HCT116 (cell line): ENCODE measurements at regions of chr1 and their contacts with region 1.

Region 1: GRCh38 chr1:118404024-118404423 is 219.0 kb upstream of the SPAG17 start:
- DNase-seq: no peak
- ATAC-seq: no peak
- H3K4me3 ChIP-seq: no peak overlapping the region
- H3K27ac ChIP-seq: no peak overlapping the region
- H3K4me1 ChIP-seq: no peaks in the 10 kb centered on the region
- H3K27me3 ChIP-seq: no peaks in the 10 kb centered on the region
- CTCF ChIP-seq: no peak
- POLR2A ChIP-seq: no peak
- RAD21 ChIP-seq: no peak

Region 2: DNA sequence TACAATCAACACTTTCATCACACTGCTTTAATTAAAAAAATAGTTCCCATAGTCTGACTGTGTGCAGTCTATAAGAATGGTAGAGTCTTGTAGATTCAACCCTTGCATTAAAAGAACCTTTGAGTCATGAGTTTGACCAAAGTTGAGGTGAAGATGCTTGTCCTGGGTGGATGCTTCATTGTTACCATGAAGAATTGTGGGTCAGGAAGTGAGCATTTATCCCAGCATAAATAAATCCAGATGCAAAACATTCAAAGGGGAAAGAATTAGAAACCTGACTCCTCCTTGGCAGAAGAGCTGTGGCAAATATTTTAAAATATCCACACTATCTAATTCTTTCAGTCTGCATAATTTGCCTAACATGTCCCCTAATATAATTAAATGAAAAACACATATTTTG is 146.1 kb before region 1 on chr1:
- CTCF ChIA-PET with region 1: no interaction called
- POLR2A ChIA-PET with region 1: no interaction called
- RAD21 ChIA-PET with region 1: no interaction called
- intact Hi-C with region 1: no loop called
- DNase-seq: no peak
- ATAC-seq: no peak
- H3K4me3 ChIP-seq: no peak overlapping the region
- H3K27ac ChIP-seq: no peak overlapping the region
- H3K4me1 ChIP-seq: no peaks in the 10 kb centered on the region
- H3K27me3 ChIP-seq: no peaks in the 10 kb centered on the region
- CTCF ChIP-seq: no peak
- POLR2A ChIP-seq: no peak
- RAD21 ChIP-seq: no peak

Region 3: DNA sequence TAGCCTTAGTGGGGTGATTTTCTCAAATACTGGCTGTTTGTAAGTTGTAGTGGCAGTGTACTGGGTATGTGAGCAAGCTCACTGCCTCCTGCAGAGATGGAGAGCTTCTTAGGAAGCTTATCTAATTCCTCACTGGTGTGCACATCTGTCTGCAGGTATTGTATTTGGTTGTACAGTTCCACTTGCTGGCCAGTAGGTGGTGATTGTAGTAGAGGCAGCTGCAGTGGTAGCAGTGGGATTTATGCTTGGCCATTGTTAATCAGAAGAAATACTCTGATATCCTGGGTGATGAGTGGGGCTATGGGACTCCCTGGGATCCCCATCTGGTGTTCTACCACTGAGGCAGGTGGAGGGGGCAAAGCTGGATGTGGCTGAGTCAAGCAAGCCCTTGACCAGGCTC is 57.1 kb after region 1 on chr1:
- CTCF ChIA-PET with region 1: no interaction called
- POLR2A ChIA-PET with region 1: no interaction called
- RAD21 ChIA-PET with region 1: no interaction called
- intact Hi-C with region 1: loop called (anchors 10 kb)
- DNase-seq: no peak
- ATAC-seq: no peak
- H3K4me3 ChIP-seq: no peak overlapping the region
- H3K27ac ChIP-seq: no peak overlapping the region
- H3K4me1 ChIP-seq: no peaks in the 10 kb centered on the region
- H3K27me3 ChIP-seq: no peaks in the 10 kb centered on the region
- CTCF ChIP-seq: peak in 1 of 3 experiments; percentile 14; a peak in 2 of 6 replicates
- POLR2A ChIP-seq: no peak
- RAD21 ChIP-seq: no peak